Heart right ventricle (tissue), 16 donors: ENCODE measurements at regions of chr10 and their contacts with region 1.

Region 1: GRCh38 chr10:96642973-96643372 is 56.2 kb upstream of the TM9SF3 start:
- DNase-seq: peak; percentile 62 to 70
- ATAC-seq: peak in 4 of 8 donors; percentile 61 to 73 (median 66)
- H3K4me3 ChIP-seq: no peak overlapping the region
- H3K27ac ChIP-seq: no peak overlapping the region
- H3K4me1 ChIP-seq: peaks cover 0 to 34% (median 0%) of the 10 kb centered on the region in 9 donors
- H3K27me3 ChIP-seq: no peaks in the 10 kb centered on the region
- CTCF ChIP-seq: peak in 7 of 9 donors; percentile 33 to 64 (median 46)

Region 2: GRCh38 chr10:96719850-96720421 is 77.0 kb after region 1 on chr10:
- intact Hi-C with region 1: loop called in 1 of 10 experiments (anchors 10 kb)
- DNase-seq: peak; percentile 47 to 67
- ATAC-seq: peak; percentile 68 to 83 (median 72)
- H3K4me3 ChIP-seq: peak overlapping the region; percentile 26 to 74 (median 60)
- H3K27ac ChIP-seq: peak overlapping the region in 6 of 10 donors; percentile 25 to 92 (median 58)
- H3K4me1 ChIP-seq: peaks cover 0 to 39% (median 9%) of the 10 kb centered on the region in 9 donors
- H3K27me3 ChIP-seq: peaks cover 0 to 22% (median 0%) of the 10 kb centered on the region in 7 donors
- CTCF ChIP-seq: peak in 6 of 9 donors; percentile 6 to 62 (median 51)

Region 3: DNA sequence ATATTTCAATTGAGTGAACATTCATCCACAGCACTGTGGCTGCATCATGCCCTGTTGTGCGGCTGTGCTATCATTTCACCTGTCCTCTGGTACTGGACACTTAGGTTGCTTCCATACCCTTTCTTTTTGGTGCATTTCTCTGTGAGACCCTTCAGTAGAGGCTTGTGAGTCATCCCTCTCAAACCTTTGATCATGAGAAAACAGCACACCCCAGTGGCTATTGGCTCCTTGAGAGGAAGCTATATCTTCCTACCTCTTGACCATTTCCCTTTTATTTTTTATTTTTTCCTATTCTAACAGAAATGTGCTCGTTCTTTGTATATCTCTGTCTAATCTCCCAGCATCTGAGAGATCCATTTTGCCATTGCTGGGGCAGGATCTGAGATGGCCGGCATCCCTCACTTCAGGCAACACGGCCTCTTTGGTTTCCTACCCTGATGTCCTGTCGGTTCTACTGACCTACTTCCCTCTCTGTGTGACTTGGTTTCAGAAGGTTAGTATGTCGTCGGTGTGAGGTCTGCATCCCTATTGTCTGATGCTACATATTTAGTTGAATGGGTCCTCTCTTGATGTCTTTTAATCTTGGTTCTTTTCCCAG is 101.1 kb after region 1 on chr10:
- intact Hi-C with region 1: loop called in 1 of 10 experiments (anchors 10 kb)
- DNase-seq: no peak
- ATAC-seq: peak in 1 of 8 donors; percentile 55
- H3K4me3 ChIP-seq: no peak overlapping the region
- H3K27ac ChIP-seq: no peak overlapping the region
- H3K4me1 ChIP-seq: peaks cover 0 to 43% (median 0%) of the 10 kb centered on the region in 9 donors
- H3K27me3 ChIP-seq: peaks cover 0 to 9% (median 0%) of the 10 kb centered on the region in 7 donors
- CTCF ChIP-seq: peak in 8 of 9 donors; percentile 8 to 51 (median 30)

Region 4: DNA sequence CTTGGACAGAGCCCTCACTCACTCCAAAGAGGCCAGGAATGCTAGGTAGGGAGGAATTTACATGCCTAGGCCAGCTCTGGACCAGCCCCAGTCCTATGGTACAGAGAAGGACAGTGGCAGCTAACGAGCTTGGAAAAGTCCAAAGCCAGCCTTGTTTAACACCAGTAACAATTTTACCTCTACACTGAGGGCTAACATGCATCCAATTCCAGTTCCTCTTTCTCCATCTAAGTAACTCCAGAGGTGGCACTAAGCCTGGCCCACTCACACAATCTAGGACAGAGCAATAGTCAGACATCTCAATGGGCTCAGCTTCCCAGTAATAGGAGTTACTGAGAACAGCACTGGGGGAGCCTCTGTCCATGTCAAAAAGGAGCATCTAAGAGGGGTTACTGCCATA is 183.5 kb after region 1 on chr10:
- intact Hi-C with region 1: loop called in 1 of 10 experiments (anchors 5 kb)
- DNase-seq: no peak
- ATAC-seq: no peak
- H3K4me3 ChIP-seq: no peak overlapping the region
- H3K27ac ChIP-seq: no peak overlapping the region
- H3K4me1 ChIP-seq: peaks cover 0 to 18% (median 6%) of the 10 kb centered on the region in 9 donors
- H3K27me3 ChIP-seq: no peaks in the 10 kb centered on the region
- CTCF ChIP-seq: no peak